ENCODE measurements at regions of chr22 and their contacts with region 1.

Region 1: DNA sequence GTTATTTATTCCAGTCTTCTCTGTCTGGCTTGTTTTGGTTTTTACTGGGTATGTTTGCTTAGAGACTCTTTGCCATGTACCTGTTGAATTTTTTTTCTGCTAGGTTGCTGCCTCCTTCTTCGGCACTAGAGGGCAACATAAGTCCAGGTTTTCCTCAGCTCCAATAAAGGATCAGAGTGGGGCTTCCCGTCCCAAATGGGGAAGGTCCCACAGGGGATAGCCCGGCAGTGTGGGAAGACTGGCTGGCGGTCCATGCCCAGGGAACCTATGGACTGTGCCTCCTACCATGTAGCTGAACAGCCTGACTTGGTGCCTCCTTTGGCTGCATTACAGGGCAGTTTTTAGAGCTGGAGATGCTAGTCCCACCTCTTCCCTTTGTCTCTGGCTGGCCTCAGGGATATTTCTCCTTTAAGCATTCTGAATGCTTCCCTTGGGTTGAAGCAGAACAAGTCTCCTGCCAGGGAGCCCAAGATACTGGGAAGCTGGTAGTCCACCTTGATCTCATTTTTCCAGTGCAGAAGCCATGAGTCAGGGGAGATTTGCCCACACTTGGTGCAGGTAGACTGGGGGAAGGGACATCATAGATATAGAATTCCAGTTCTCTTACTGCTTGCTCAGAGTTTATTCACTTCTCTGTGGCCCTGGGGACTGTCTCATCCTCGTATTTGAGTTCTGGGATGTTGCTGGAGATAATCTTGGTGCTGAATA is 60.2 kb downstream of the BRD1 start:
- DNase-seq: peak; percentile 48 to 58 (median 54)
- H3K4me3 ChIP-seq: no peak overlapping the region
- H3K4me3 Mint-ChIP-seq: peak overlapping the region in 1 of 8 donors; percentile 12
- H3K27ac ChIP-seq: no peak overlapping the region
- H3K27ac Mint-ChIP-seq: peak overlapping the region; percentile 6 to 88 (median 45)
- H3K4me1 ChIP-seq: no peaks in the 10 kb centered on the region
- H3K4me1 Mint-ChIP-seq: peaks cover 0 to 7% (median 2%) of the 10 kb centered on the region in 4 donors
- H3K27me3 ChIP-seq: no peaks in the 10 kb centered on the region
- H3K27me3 Mint-ChIP-seq: no peaks in the 10 kb centered on the region

Region 2: GRCh38 chr22:49807780-49808708 is 40.5 kb after region 1 on chr22:
- CTCF ChIA-PET with region 1: no interaction called
- POLR2A ChIA-PET with region 1: no interaction called
- intact Hi-C with region 1: loop called (anchors 5 kb)
- DNase-seq: peak; percentile 70 to 80 (median 76)
- H3K4me3 ChIP-seq: peak overlapping the region in 1 of 2 donors; percentile 13
- H3K4me3 Mint-ChIP-seq: peak overlapping the region in 7 of 8 donors; percentile 35 to 78 (median 65)
- H3K27ac ChIP-seq: peak overlapping the region; percentile 24
- H3K27ac Mint-ChIP-seq: peak overlapping the region; percentile 83 to 94 (median 87)
- H3K4me1 ChIP-seq: peaks cover 87% of the 10 kb centered on the region
- H3K4me1 Mint-ChIP-seq: peaks cover 52 to 92% (median 70%) of the 10 kb centered on the region in 4 donors
- H3K27me3 ChIP-seq: no peaks in the 10 kb centered on the region
- H3K27me3 Mint-ChIP-seq: no peaks in the 10 kb centered on the region

Region 3: DNA sequence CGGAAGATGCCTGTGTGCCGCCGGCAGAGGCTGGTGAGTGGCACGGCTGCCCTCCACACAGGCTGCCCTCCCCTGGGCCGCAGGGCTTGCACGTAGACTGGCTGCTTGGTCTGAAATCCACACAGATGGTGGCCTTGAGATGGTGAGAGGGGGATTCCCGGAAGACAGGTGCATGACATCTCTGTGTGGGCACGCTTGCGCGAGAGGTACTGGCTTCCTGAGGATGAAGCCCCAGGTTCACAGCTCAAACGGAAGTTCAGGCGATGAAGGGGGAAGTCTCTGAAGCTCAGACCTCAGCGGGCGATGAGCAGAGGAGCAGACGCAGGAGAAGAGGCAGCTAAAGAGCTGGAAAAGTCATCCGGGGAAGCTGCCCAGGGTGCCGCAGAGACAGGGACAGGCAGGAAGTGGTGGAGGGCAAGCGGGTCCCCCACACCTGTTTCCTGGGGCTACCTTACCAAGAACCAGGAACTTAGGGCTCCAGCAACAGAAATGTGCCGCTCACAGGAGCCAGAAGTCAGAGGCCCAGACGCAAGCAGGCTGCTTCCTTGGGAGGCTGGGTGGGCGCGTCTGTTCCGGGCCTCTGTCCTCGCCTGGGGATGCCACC is 158.1 kb after region 1 on chr22:
- CTCF ChIA-PET with region 1: interaction called, 16 read pairs
- POLR2A ChIA-PET with region 1: interaction called, 7 read pairs
- intact Hi-C with region 1: loop called (anchors 1 kb)
- DNase-seq: peak; percentile 82 to 94 (median 84)
- H3K4me3 ChIP-seq: peak overlapping the region; percentile 26 to 48
- H3K4me3 Mint-ChIP-seq: peak overlapping the region; percentile 75 to 88 (median 84)
- H3K27ac ChIP-seq: peak overlapping the region; percentile 91
- H3K27ac Mint-ChIP-seq: peak overlapping the region; percentile 94 to 100 (median 95)
- H3K4me1 ChIP-seq: peaks cover 27% of the 10 kb centered on the region
- H3K4me1 Mint-ChIP-seq: peaks cover 16 to 48% (median 32%) of the 10 kb centered on the region in 4 donors
- H3K27me3 ChIP-seq: no peaks in the 10 kb centered on the region
- H3K27me3 Mint-ChIP-seq: no peaks in the 10 kb centered on the region

Region 4: GRCh38 chr22:49992921-49993648 is 225.6 kb after region 1 on chr22:
- CTCF ChIA-PET with region 1: interaction called, 28 read pairs
- POLR2A ChIA-PET with region 1: interaction called, 5 read pairs
- intact Hi-C with region 1: loop called (anchors 1 kb)
- DNase-seq: peak; percentile 47 to 69 (median 57)
- H3K4me3 ChIP-seq: no peak overlapping the region
- H3K4me3 Mint-ChIP-seq: peak overlapping the region in 3 of 8 donors; percentile 38 to 64 (median 60)
- H3K27ac ChIP-seq: no peak overlapping the region
- H3K27ac Mint-ChIP-seq: peak overlapping the region in 5 of 7 donors; percentile 15 to 74 (median 50)
- H3K4me1 ChIP-seq: peaks cover 9% of the 10 kb centered on the region
- H3K4me1 Mint-ChIP-seq: peaks cover 3 to 12% (median 6%) of the 10 kb centered on the region in 4 donors
- H3K27me3 ChIP-seq: no peaks in the 10 kb centered on the region
- H3K27me3 Mint-ChIP-seq: peaks cover 4% of the 10 kb centered on the region in 2 donors

Region 5: DNA sequence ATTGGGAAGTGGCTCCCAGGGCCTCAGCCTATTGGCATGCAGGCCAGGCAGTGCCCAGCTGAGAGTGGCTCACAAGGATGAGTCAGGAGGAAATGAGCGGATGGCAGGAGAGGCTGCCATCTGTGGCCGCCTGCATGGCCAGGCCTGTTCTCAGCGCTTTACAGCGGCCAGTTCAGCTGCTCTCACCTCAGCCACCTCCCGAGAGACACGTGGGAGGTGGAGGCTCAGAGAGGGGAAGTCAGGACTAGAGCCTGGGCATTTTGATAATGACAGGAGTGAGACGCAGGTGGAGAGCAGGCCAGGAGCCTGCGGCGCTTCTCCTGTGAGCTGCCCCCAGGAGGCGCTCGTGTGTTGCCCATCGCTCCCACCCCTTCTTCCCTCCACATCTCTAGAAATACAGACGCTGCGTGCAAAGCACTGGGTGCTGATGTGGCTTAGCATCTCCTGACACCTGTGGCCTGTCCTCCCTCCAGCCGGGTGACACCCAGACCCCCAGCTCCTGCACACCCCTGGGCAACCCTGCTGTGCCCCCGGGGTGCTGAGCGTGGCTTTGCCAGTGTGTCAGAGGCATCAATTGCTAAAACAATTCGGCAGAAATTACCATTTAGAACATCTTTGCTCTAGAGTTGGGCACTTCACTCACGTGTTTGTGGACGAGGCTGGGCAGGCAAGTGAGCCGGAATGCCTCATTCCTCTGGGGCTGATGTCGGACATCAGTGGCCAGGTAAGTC is 381.6 kb after region 1 on chr22:
- CTCF ChIA-PET with region 1: no interaction called
- POLR2A ChIA-PET with region 1: no interaction called
- intact Hi-C with region 1: loop called (anchors 1 kb)
- DNase-seq: peak; percentile 69 to 76 (median 75)
- H3K4me3 ChIP-seq: no peak overlapping the region
- H3K4me3 Mint-ChIP-seq: no peak overlapping the region
- H3K27ac ChIP-seq: no peak overlapping the region
- H3K27ac Mint-ChIP-seq: peak overlapping the region in 1 of 7 donors; percentile 7
- H3K4me1 ChIP-seq: no peaks in the 10 kb centered on the region
- H3K4me1 Mint-ChIP-seq: peaks cover 0 to 4% (median under 1%) of the 10 kb centered on the region in 4 donors
- H3K27me3 ChIP-seq: no peaks in the 10 kb centered on the region
- H3K27me3 Mint-ChIP-seq: peaks cover 2 to 3% of the 10 kb centered on the region in 2 donors

Measured in CD4-positive, alpha-beta memory T cell (primary cell).